GM12878 (cell line): ENCODE measurements at regions of chr1 and their contacts with region 1.

Region 1: GRCh38 chr1:227946624-227947385 is 927 bp downstream of the WNT9A start:
- DNase-seq: no peak
- ATAC-seq: peak; percentile 91
- H3K4me3 ChIP-seq: no peak overlapping the region
- H3K27ac ChIP-seq: no peak overlapping the region
- H3K4me1 ChIP-seq: no peaks in the 10 kb centered on the region
- H3K27me3 ChIP-seq: peaks cover 7 to 10% of the 10 kb centered on the region in 2 experiments
- CTCF ChIP-seq: peak; percentile 39 to 63 (median 42); a peak in 5 of 6 replicates
- EP300 ChIP-seq: no peak
- POLR2A ChIP-seq: no peak
- RAD21 ChIP-seq: peak; percentile 72

Region 2: DNA sequence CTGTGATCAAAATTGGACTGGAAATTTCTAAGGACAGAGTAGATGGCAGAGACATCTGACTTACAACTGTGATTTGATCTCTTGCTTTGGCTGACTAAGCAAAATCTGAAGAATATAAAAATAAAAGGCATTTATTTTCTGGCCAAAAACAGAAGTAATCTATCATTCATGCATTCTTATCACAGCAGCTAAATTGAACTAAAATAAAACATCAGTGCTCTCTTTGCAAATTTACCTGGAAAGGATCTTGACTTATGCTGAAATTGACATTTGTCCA is 464.8 kb before region 1 on chr1:
- CTCF ChIA-PET with region 1: interaction called, 4 read pairs
- POLR2A ChIA-PET with region 1: no interaction called
- RAD21 ChIA-PET with region 1: no interaction called
- SMC1A ChIA-PET with region 1: interaction called, 3 read pairs
- in situ Hi-C with region 1: loop called (anchors 5 kb)
- intact Hi-C with region 1: loop called (anchors 2 kb)
- DNase-seq: no peak
- ATAC-seq: no peak
- H3K4me3 ChIP-seq: no peak overlapping the region
- H3K27ac ChIP-seq: no peak overlapping the region
- H3K4me1 ChIP-seq: no peaks in the 10 kb centered on the region
- H3K27me3 ChIP-seq: no peaks in the 10 kb centered on the region
- CTCF ChIP-seq: no peak
- EP300 ChIP-seq: no peak
- POLR2A ChIP-seq: no peak
- RAD21 ChIP-seq: no peak

Region 3: GRCh38 chr1:227542143-227543120 is 404.4 kb before region 1 on chr1:
- CTCF ChIA-PET with region 1: interaction called, 4 read pairs
- POLR2A ChIA-PET with region 1: no interaction called
- RAD21 ChIA-PET with region 1: no interaction called
- SMC1A ChIA-PET with region 1: no interaction called
- in situ Hi-C with region 1: no loop called
- intact Hi-C with region 1: loop called (anchors 10 kb)
- DNase-seq: peak; percentile 26
- ATAC-seq: peak; percentile 97
- H3K4me3 ChIP-seq: peak overlapping the region; percentile 58; the same call in 1 of the 2 replicates
- H3K27ac ChIP-seq: peak overlapping the region; percentile 33; the same call in 1 of the 2 replicates
- H3K4me1 ChIP-seq: peaks cover 3% of the 10 kb centered on the region; the same call in 1 of the 2 replicates
- H3K27me3 ChIP-seq: no peaks in the 10 kb centered on the region
- CTCF ChIP-seq: peak; percentile 89 to 94 (median 90)
- EP300 ChIP-seq: no peak
- POLR2A ChIP-seq: no peak
- RAD21 ChIP-seq: peak; percentile 48

Region 4: DNA sequence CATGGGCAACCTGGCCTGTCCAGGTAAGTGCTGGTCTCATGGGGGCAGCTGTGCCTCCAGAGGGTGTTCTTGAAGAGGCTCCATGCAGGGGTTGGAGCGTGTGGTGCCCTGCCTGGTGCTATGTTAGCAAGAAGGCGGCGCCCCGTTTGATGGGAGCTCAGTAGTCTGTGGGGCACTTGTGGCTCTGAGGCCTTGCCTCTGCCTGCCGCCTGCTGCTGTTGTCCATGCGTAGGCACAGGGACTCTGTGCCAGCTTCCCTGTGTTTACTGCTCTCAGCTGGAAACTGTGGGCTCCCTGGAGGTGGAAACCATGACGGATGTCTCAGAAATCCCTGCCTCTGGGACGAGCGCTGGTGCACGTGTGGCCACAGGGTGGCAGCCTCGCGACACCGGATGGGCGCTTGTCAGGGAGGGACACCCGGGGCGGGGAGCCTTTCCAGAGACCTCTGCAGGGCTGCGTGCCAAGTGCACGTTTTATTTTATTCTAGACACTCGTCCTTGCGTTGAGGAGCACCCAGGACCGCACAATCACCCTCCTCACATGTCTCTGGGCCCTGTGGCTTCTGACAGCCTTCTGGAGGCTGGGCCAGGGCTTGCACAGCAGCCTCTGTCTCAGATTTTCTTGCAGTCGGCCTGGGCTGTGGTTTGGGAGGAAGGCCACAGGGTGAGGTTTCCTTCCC is 184.4 kb before region 1 on chr1:
- CTCF ChIA-PET with region 1: interaction called, 34 read pairs
- POLR2A ChIA-PET with region 1: no interaction called
- RAD21 ChIA-PET with region 1: no interaction called
- SMC1A ChIA-PET with region 1: no interaction called
- in situ Hi-C with region 1: loop called (anchors 5 kb)
- intact Hi-C with region 1: loop called (anchors 5 kb)
- DNase-seq: no peak
- ATAC-seq: peak; percentile 97
- H3K4me3 ChIP-seq: no peak overlapping the region
- H3K27ac ChIP-seq: no peak overlapping the region
- H3K4me1 ChIP-seq: peaks cover 36% of the 10 kb centered on the region
- H3K27me3 ChIP-seq: no peaks in the 10 kb centered on the region
- CTCF ChIP-seq: peak; percentile 87 to 96 (median 89)
- EP300 ChIP-seq: no peak
- POLR2A ChIP-seq: no peak
- RAD21 ChIP-seq: peak; percentile 85

Region 5: DNA sequence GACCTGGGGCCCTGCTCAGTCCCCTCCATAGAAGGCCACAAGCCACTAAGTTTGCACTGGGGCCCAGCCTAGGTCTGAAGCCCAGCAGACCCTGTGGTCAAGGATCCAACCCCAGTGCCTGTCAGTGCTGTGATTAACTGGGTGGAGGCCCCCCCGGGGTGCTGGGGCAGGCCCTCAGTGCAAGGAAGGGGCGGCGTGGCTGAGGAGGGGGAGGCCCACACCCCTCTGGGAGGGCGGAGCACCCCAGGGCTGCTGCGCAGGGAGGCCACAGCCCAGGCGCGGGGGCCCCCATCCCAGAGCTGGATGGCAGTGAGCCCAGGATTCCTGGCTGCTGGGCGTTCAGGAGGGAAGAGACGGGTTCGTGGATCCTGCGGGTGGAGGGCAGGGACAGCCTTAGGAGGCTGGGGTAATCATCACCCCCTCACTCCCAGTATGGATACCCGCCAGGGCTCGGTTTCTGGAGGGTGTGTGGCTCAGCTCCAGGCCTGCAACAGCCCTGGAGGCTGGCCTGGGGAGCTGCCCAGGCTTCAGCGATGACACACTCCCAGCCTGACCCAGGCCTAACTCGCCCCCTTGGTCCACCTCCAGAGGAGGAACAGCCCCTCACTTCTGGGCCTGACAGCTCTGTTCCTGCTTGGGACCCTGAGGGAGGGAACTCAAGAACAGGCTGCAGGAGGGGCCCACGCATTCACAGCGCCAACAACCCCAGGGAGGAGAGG is 203.8 kb after region 1 on chr1:
- CTCF ChIA-PET with region 1: no interaction called
- POLR2A ChIA-PET with region 1: no interaction called
- RAD21 ChIA-PET with region 1: no interaction called
- SMC1A ChIA-PET with region 1: no interaction called
- in situ Hi-C with region 1: no loop called
- intact Hi-C with region 1: no loop called
- DNase-seq: no peak
- ATAC-seq: peak; percentile 9
- H3K4me3 ChIP-seq: no peak overlapping the region
- H3K27ac ChIP-seq: no peak overlapping the region
- H3K4me1 ChIP-seq: no peaks in the 10 kb centered on the region
- H3K27me3 ChIP-seq: no peaks in the 10 kb centered on the region
- CTCF ChIP-seq: no peak
- EP300 ChIP-seq: no peak
- POLR2A ChIP-seq: no peak; the same call in 1 of the 2 replicates
- RAD21 ChIP-seq: no peak